ENCODE measurements at regions of chr17 and their contacts with region 1.

Region 1: DNA sequence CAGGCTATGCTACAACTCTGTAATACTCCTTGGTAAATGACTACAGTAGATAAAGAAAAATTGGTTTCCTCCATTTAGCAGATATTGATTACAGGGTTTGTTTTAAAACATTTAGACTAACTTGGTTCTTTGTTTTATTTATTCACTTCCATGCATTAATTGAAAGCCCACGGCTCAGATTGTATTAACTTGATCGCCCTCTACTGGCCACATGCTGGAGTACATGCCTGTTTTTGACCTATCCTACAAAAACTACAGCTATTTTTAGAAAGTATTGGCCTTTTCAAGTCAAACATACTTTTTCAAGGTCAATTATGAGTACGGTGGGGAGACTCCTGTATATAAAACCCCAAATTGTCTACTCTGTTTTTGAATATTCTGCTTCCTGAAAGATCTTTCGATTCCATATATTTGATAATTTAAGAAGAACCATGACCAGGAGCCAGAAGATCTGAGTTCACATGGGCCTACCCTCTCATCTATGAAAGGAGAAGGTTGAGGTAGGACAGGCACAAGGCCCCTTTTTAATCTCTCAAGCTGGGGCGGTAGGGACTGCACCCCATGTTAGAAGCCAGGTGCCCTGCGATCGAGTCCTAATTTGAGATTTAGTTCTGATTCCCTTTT is 51.8 kb downstream of the CA10 start:
- DNase-seq: peak; percentile 66
- H3K4me3 Mint-ChIP-seq: no peak overlapping the region
- H3K27ac Mint-ChIP-seq: no peak overlapping the region
- H3K4me1 Mint-ChIP-seq: no peaks in the 10 kb centered on the region
- H3K27me3 Mint-ChIP-seq: peaks cover 17% of the 10 kb centered on the region

Region 2: GRCh38 chr17:51764387-51764972 is 342.3 kb before region 1 on chr17:
- CTCF ChIA-PET with region 1: interaction called, 43 read pairs
- intact Hi-C with region 1: loop called (anchors 1 kb)
- DNase-seq: peak; percentile 68
- H3K4me3 Mint-ChIP-seq: no peak overlapping the region
- H3K27ac Mint-ChIP-seq: no peak overlapping the region
- H3K4me1 Mint-ChIP-seq: no peaks in the 10 kb centered on the region
- H3K27me3 Mint-ChIP-seq: peaks cover 22% of the 10 kb centered on the region

Region 3: GRCh38 chr17:51860954-51861561 is 245.7 kb before region 1 on chr17:
- CTCF ChIA-PET with region 1: no interaction called
- intact Hi-C with region 1: loop called (anchors 2 kb)
- DNase-seq: peak; percentile 38
- H3K4me3 Mint-ChIP-seq: no peak overlapping the region
- H3K27ac Mint-ChIP-seq: no peak overlapping the region
- H3K4me1 Mint-ChIP-seq: no peaks in the 10 kb centered on the region
- H3K27me3 Mint-ChIP-seq: peaks cover 8% of the 10 kb centered on the region

Measured in activated naive CD4-positive, alpha-beta T cell treated with anti-CD3 and anti-CD28 coated beads for 36 hours (primary cell).